ENCODE measurements at regions of chr11 and their contacts with region 1.

Region 1: GRCh38 chr11:62665075-62665598 is at the starts of genes C11orf98 and CSKMT:
- DNase-seq: peak; percentile 87 to 89 (median 89)
- H3K4me3 ChIP-seq: peak within 1 kb of the TSS; percentile 70 to 99 (median 99)
- H3K4me3 Mint-ChIP-seq: peak within 1 kb of the TSS; percentile 92 to 97
- H3K27ac ChIP-seq: peak within 1 kb of the TSS; percentile 66 to 86
- H3K27ac Mint-ChIP-seq: peak within 1 kb of the TSS; percentile 80 to 94 (median 93)
- H3K4me1 ChIP-seq: peaks cover 24 to 28% of the 10 kb centered on the region in 2 donors
- H3K4me1 Mint-ChIP-seq: peaks cover 42% of the 10 kb centered on the region
- H3K27me3 ChIP-seq: no peaks in the 10 kb centered on the region
- H3K27me3 Mint-ChIP-seq: no peaks in the 10 kb centered on the region
- CTCF ChIP-seq: no peak
- polyA plus RNA-seq, gene C11orf98: 25.9 to 78.2 (median 74.6) TPM
- polyA plus RNA-seq, gene CSKMT: 0.73 to 4.9 (median 1.4) TPM

Region 2: DNA sequence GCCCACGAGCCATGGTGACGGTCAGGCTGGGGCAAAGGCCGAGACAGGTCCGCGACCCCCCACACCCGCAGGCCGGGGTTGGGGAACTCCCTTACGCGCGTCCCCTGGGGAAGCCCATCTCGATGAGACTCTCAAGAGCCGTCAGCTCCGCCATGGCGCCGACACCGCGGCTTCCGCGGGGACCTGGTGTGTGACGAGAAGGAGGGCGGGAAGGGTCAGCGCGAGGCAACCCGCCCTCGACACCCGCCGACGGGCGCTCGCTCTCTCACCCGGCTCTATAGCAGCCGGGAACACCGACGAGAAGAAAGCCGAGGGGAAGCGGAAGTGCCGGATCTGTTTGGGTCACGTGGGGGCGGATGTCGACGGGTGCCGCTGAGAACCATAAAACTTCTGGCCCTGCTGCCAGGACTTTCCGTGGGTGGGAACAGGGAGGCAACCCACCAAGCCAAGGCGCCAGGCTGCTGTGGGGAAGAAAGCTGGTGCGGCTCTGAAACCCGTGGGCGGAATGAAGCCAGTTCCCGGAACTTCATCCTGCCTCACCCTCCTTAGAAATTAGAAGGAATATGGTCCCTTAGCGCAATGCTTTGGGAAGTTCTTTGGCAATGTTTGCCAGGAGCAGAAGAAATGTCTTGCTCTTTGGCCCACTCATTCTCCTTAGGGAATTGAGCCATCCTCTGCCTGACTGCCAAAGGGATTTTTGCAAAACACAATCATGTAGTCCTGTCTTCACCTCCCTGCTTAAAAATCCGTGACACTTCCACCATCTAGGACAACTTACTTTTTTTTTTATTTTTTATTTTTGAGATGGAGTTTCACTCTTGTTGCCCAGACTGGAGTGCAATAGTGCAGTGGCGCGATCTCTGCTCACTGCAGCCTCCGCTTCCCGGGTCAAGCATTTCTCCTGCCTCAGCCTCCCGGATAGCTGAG is 13.9 kb after region 1 on chr11 and contains the start of gene UBXN1:
- intact Hi-C with region 1: loop called in 1 of 2 experiments (anchors 2 kb)
- DNase-seq: peak; percentile 82 to 87 (median 85)
- H3K4me3 ChIP-seq: peak within 1 kb of the TSS; percentile 77 to 98 (median 93)
- H3K4me3 Mint-ChIP-seq: peak within 1 kb of the TSS; percentile 87 to 93
- H3K27ac ChIP-seq: peak within 1 kb of the TSS; percentile 83 to 97
- H3K27ac Mint-ChIP-seq: peak within 1 kb of the TSS; percentile 89 to 96 (median 93)
- H3K4me1 ChIP-seq: peaks cover 13 to 29% of the 10 kb centered on the region in 2 donors
- H3K4me1 Mint-ChIP-seq: peaks cover 33% of the 10 kb centered on the region
- H3K27me3 ChIP-seq: no peaks in the 10 kb centered on the region
- H3K27me3 Mint-ChIP-seq: peaks cover 0 to 3% (median 2%) of the 10 kb centered on the region in 3 donors
- CTCF ChIP-seq: no peak
- polyA plus RNA-seq, gene UBXN1: 93.9 to 147 (median 106) TPM

Region 3: DNA sequence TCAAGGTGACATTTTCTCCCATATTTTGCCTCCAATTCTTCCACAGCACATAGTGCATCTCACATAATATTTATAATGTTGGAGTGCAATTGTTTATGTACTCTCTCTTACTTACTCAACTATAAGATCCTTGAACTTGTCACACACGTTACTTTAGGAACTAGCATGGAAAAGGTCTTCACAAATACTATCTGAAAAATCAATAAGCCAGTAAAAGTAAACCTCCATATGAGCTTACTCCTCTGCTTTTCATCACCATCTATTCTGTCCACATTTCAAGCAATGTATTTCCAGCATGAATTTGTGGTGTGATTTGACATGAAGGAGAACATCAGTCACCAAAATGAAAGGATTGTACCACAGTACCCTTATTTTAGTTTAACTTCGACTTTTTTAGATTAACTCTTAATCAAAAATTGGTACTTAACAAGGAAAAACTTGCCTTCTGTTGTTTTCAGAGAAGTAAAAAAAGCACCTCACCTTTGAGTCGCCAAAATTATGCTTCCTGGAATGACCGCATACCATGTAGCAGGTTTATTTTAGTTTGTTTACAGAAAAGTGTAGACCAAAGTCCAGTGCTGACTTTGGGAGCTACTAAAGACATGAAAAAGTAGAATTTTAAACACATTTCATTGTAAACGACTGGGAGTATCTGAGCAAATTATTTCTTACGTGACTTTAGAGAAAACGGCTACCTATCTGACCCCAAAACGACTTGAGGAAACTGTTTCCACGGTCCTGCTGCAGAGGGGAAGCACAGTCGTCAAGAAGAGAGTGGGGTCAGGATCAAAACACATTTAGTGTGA is 704.2 kb after region 1 on chr11 and contains the start of gene SLC22A9:
- intact Hi-C with region 1: no loop called
- DNase-seq: no peak
- H3K4me3 ChIP-seq: no peak within 1 kb of the TSS
- H3K4me3 Mint-ChIP-seq: no peak within 1 kb of the TSS
- H3K27ac ChIP-seq: no peak within 1 kb of the TSS
- H3K27ac Mint-ChIP-seq: no peak within 1 kb of the TSS
- H3K4me1 ChIP-seq: no peaks in the 10 kb centered on the region
- H3K4me1 Mint-ChIP-seq: no peaks in the 10 kb centered on the region
- H3K27me3 ChIP-seq: peaks cover 2 to 10% of the 10 kb centered on the region in 2 donors
- H3K27me3 Mint-ChIP-seq: peaks cover 5 to 14% (median 13%) of the 10 kb centered on the region in 3 donors
- CTCF ChIP-seq: no peak
- polyA plus RNA-seq, gene SLC22A9: not detected